ENCODE measurements at regions of chr2 and their contacts with region 1.

Region 1: GRCh38 chr2:218671654-218672566 is at the starts of genes RNF25 and STK36:
- DNase-seq: peak; percentile 66
- H3K4me3 Mint-ChIP-seq: peak within 1 kb of the TSS; percentile 96
- H3K27ac Mint-ChIP-seq: peak within 1 kb of the TSS; percentile 97
- H3K4me1 Mint-ChIP-seq: peaks cover 18% of the 10 kb centered on the region
- H3K27me3 Mint-ChIP-seq: no peaks in the 10 kb centered on the region
- CTCF ChIP-seq: no peak
- total RNA-seq, gene RNF25: 58.9 and 60.8 TPM in 2 replicates
- total RNA-seq, gene STK36: 20.7 and 35.1 TPM in 2 replicates

Region 2: DNA sequence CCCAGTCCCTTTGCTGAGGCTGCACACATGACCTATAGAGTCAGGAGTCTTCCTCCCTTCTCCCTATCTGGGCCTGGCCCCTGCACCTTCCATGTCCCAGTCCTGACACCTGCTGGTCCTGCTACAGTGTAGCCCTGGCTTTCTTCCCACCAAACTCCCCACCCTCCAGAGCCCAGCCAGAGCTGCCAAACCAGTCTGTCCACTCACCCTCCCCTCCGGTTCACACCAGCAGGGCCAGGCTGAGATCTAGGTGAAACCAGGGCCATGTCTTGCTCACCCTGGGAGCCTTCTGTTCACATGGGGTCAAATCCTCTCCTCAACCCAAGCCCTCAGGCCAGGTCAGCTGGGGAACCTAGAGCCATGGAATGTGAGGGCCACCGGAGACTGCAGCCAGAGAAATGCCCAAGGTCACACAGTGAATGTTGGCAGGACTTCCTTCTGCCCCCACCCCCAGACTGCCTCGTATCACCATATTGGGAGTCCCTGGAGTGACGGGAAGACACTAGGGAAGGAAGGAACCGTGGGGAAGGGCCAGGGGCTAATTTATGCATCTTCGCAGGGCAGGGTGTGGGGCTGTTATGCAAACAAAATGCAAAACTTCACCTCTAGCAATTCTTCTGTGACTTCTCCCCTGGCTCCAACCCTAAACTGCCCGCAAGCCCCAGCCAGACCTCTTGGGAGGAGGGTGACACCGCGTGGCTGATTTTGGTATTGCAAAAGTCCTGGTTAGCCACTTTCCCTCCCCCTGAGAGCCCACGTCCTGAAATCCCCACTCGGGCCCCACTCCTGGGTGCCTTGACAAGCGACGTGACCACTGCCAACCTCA is 683.7 kb before region 1 on chr2:
- CTCF ChIA-PET with region 1: no interaction called
- POLR2A ChIA-PET with region 1: no interaction called
- intact Hi-C with region 1: no loop called
- DNase-seq: peak; percentile 75
- H3K4me3 Mint-ChIP-seq: no peak overlapping the region
- H3K27ac Mint-ChIP-seq: no peak overlapping the region
- H3K4me1 Mint-ChIP-seq: peaks cover 7% of the 10 kb centered on the region
- H3K27me3 Mint-ChIP-seq: no peaks in the 10 kb centered on the region
- CTCF ChIP-seq: peak; percentile 93

Region 3: GRCh38 chr2:218093879-218094278 is 578.0 kb before region 1 on chr2:
- CTCF ChIA-PET with region 1: no interaction called
- POLR2A ChIA-PET with region 1: no interaction called
- intact Hi-C with region 1: no loop called
- DNase-seq: peak; percentile 35
- H3K4me3 Mint-ChIP-seq: no peak overlapping the region
- H3K27ac Mint-ChIP-seq: no peak overlapping the region
- H3K4me1 Mint-ChIP-seq: no peaks in the 10 kb centered on the region
- H3K27me3 Mint-ChIP-seq: peaks cover 17% of the 10 kb centered on the region
- CTCF ChIP-seq: no peak

Region 4: GRCh38 chr2:218648088-218648786 is 23.7 kb before region 1 on chr2:
- CTCF ChIA-PET with region 1: interaction called, 10 read pairs
- POLR2A ChIA-PET with region 1: no interaction called
- intact Hi-C with region 1: no loop called
- DNase-seq: peak; percentile 68
- H3K4me3 Mint-ChIP-seq: no peak overlapping the region
- H3K27ac Mint-ChIP-seq: no peak overlapping the region
- H3K4me1 Mint-ChIP-seq: no peaks in the 10 kb centered on the region
- H3K27me3 Mint-ChIP-seq: no peaks in the 10 kb centered on the region
- CTCF ChIP-seq: peak; percentile 67

Region 5: GRCh38 chr2:218733171-218734021 is 61.5 kb after region 1 on chr2:
- CTCF ChIA-PET with region 1: no interaction called
- POLR2A ChIA-PET with region 1: interaction called, 10 read pairs
- intact Hi-C with region 1: no loop called
- DNase-seq: peak; percentile 91
- H3K4me3 Mint-ChIP-seq: peak overlapping the region; percentile 38
- H3K27ac Mint-ChIP-seq: peak overlapping the region; percentile 83
- H3K4me1 Mint-ChIP-seq: peaks cover 37% of the 10 kb centered on the region
- H3K27me3 Mint-ChIP-seq: no peaks in the 10 kb centered on the region
- CTCF ChIP-seq: no peak

Region 6: DNA sequence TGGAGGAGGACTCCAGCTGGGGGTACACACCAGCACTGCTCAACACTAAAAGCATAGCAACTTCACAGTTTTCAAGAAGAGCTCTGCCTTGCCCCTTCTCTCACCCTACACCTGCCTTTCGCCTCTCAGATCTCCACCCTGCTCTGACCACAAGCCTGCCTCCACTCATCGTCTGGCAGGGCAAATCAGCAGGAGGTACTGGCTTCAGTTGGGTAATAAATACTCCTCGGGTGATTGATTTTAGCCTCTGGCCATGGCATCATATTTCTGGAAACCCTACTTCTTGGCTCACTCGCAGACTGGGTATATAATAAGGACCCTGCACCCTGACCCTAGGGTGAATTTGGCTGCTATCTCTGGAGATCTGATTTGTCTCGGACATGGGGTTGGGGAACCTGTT is 162.8 kb after region 1 on chr2:
- CTCF ChIA-PET with region 1: no interaction called
- POLR2A ChIA-PET with region 1: no interaction called
- intact Hi-C with region 1: no loop called
- DNase-seq: peak; percentile 60
- H3K4me3 Mint-ChIP-seq: no peak overlapping the region
- H3K27ac Mint-ChIP-seq: no peak overlapping the region
- H3K4me1 Mint-ChIP-seq: peaks cover 20% of the 10 kb centered on the region
- H3K27me3 Mint-ChIP-seq: peaks cover 7% of the 10 kb centered on the region
- CTCF ChIP-seq: no peak